ENCODE measurements at regions of chr10 and their contacts with region 1.

Region 1: GRCh38 chr10:27223964-27224363 is 16.6 kb downstream of the ACBD5 start:
- DNase-seq: peak; percentile 37 to 56 (median 51)
- H3K4me3 ChIP-seq: no peak overlapping the region
- H3K4me3 Mint-ChIP-seq: peak overlapping the region in 2 of 8 donors; percentile 26 to 31
- H3K27ac ChIP-seq: no peak overlapping the region
- H3K27ac Mint-ChIP-seq: peak overlapping the region in 6 of 7 donors; percentile 37 to 87 (median 75)
- H3K4me1 ChIP-seq: peaks cover 24% of the 10 kb centered on the region
- H3K4me1 Mint-ChIP-seq: peaks cover 8 to 24% (median 16%) of the 10 kb centered on the region in 4 donors
- H3K27me3 ChIP-seq: no peaks in the 10 kb centered on the region
- H3K27me3 Mint-ChIP-seq: no peaks in the 10 kb centered on the region

Region 2: DNA sequence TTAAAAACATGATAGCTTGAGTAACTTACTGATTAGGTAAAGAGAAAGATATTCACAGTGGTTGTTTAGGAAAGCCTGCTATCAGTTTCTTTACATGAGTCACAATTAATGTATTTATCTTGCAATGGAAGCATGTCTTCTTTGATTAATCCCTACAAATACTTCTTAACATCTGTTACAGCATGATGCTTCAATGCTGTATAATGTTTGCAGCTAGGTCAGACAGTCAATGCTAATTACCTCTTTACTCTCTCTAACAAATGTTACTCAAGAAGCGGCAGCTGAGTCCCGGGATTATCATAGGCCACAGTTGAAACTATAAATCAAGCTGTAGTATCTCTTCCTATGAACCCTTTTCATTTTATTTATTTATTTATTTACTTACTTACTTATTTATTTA is 16.6 kb before region 1 on chr10:
- CTCF ChIA-PET with region 1: interaction called, 23 read pairs
- POLR2A ChIA-PET with region 1: no interaction called
- intact Hi-C with region 1: no loop called
- DNase-seq: no peak
- H3K4me3 ChIP-seq: no peak overlapping the region
- H3K4me3 Mint-ChIP-seq: no peak overlapping the region
- H3K27ac ChIP-seq: no peak overlapping the region
- H3K27ac Mint-ChIP-seq: no peak overlapping the region
- H3K4me1 ChIP-seq: no peaks in the 10 kb centered on the region
- H3K4me1 Mint-ChIP-seq: peaks cover 0 to 2% (median 0%) of the 10 kb centered on the region in 4 donors
- H3K27me3 ChIP-seq: no peaks in the 10 kb centered on the region
- H3K27me3 Mint-ChIP-seq: no peaks in the 10 kb centered on the region

Region 3: DNA sequence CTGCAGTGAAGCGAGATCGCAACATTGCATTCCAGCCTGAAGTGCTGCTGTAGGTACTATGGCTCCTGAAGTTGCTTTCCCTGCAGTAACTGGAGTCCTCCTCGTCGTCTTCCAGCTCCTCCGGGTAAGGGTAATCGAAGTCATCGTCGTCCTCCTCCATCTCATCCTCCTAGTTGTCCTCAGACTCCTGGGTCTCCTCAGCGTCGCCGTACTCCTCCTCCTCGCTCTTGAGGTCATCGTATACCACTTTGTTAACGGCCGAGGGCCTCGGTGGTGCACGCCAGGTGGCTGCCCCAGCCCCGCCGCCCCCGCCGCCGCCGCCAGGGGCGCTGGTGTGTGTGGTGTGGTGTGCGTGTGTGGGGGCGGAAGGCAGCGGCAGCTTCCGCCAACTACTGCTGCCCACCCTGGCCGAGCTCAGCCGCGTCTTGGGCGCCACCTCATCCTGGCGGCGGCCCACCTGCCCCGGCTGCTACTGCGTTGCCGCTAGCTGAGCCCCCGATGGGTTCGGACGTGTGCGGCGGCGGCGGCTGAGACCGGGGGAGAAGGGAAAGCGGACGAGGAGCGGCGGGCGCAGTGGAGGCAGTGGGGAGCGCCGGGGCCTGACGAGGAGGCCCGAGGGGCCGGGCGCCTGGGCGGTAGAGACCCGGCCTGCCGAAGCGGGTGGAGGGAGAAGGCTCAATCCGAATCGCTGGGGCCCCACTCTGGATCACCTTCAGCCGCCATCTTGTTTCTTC is 28.5 kb after region 1 on chr10:
- CTCF ChIA-PET with region 1: interaction called, 22 read pairs
- POLR2A ChIA-PET with region 1: interaction called, 4 read pairs
- intact Hi-C with region 1: loop called (anchors 1 kb)
- DNase-seq: peak; percentile 74 to 82 (median 78)
- H3K4me3 ChIP-seq: peak overlapping the region in 1 of 2 donors; percentile 47
- H3K4me3 Mint-ChIP-seq: peak overlapping the region; percentile 77 to 88 (median 81)
- H3K27ac ChIP-seq: peak overlapping the region; percentile 58
- H3K27ac Mint-ChIP-seq: peak overlapping the region; percentile 55 to 91 (median 85)
- H3K4me1 ChIP-seq: peaks cover 3% of the 10 kb centered on the region
- H3K4me1 Mint-ChIP-seq: peaks cover 5 to 10% (median 7%) of the 10 kb centered on the region in 4 donors
- H3K27me3 ChIP-seq: no peaks in the 10 kb centered on the region
- H3K27me3 Mint-ChIP-seq: no peaks in the 10 kb centered on the region

Region 4: DNA sequence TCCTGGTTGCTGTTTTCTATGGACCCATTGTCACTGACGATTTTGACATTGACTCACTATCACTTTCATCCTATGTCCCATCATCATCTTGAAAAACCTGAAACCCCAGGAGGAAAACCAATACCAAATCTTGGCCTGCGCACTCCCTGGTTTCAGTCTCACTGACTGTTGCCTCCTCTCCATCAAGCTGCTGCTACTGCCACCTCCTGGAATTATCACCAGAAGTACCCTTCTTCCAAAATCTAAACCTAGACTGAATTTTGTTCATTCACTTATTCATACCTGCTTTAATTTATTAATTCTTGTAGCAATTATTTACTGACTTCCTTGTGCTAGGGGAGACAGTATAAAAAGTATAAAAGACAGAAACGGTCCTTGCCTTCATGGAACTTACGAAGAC is 61.1 kb after region 1 on chr10:
- CTCF ChIA-PET with region 1: interaction called, 34 read pairs
- POLR2A ChIA-PET with region 1: interaction called, 5 read pairs
- intact Hi-C with region 1: loop called (anchors 1 kb)
- DNase-seq: peak; percentile 34 to 55 (median 37)
- H3K4me3 ChIP-seq: no peak overlapping the region
- H3K4me3 Mint-ChIP-seq: no peak overlapping the region
- H3K27ac ChIP-seq: no peak overlapping the region
- H3K27ac Mint-ChIP-seq: no peak overlapping the region
- H3K4me1 ChIP-seq: no peaks in the 10 kb centered on the region
- H3K4me1 Mint-ChIP-seq: peaks cover 0 to 4% (median 3%) of the 10 kb centered on the region in 4 donors
- H3K27me3 ChIP-seq: no peaks in the 10 kb centered on the region
- H3K27me3 Mint-ChIP-seq: no peaks in the 10 kb centered on the region

Region 5: DNA sequence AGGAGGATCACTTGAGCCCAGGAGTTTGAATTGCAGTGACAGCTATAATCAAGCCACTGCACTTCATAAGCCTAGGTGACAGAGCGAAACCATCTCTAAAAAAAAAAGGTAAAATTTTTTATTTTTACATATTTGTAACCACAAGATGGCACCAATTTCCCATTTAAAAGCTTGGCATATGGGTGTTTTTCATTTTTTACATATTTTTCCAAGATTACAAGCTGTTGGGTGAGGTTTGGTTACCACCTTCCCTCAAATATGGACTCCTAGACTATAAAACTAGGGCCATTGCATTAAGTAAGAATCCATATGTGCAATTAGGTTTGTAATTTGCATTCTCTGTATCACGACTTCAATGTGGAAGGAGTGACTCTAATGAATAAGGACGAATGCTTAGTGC is 145.9 kb after region 1 on chr10:
- CTCF ChIA-PET with region 1: interaction called, 15 read pairs
- POLR2A ChIA-PET with region 1: no interaction called
- intact Hi-C with region 1: no loop called
- DNase-seq: peak in 1 of 5 donors; percentile 9
- H3K4me3 ChIP-seq: no peak overlapping the region
- H3K4me3 Mint-ChIP-seq: no peak overlapping the region
- H3K27ac ChIP-seq: no peak overlapping the region
- H3K27ac Mint-ChIP-seq: peak overlapping the region in 2 of 7 donors; percentile 16 to 39
- H3K4me1 ChIP-seq: no peaks in the 10 kb centered on the region
- H3K4me1 Mint-ChIP-seq: no peaks in the 10 kb centered on the region
- H3K27me3 ChIP-seq: no peaks in the 10 kb centered on the region
- H3K27me3 Mint-ChIP-seq: peaks cover 0 to 3% of the 10 kb centered on the region in 2 donors